ENCODE measurements at regions of chr9 and their contacts with region 1.

Region 1: DNA sequence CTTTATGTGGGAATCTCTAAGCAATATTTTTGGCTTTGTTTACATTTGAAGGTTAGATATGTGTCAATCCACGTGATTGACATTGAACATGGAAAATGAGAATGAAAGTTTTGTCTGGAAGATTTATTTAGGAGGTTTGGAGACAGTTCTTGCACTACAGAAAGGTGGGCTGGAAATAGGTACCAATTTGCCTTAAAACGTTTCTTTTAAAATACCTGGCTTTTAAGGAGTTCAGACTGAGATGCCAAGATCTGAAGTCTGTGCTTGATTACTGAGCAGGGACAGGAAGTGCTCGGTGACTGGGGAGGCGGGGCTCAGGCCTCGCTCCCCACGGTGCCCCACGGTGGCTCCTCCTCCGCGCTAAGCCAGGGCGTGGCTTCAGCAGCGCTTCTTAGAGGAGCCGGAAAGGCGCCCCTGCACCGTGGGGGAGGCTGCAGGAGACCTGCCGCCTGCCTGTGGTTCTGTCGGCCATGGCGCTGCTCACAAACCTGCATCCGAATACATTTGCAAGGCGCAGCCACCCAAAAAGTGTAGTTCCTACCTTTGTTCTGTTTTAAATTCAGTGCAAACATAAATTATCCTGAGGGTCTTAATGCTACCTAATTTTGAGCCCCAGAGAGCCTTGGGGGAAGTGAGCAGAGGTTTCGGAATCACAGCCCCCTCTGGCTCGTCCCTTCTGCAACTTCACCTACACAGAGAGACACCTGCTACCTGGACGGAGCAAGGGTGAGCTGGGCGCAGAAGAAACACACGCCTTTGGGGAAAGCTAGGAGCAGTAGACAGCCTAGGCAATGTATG is 49.2 kb downstream of the USP20 start:
- H3K4me3 Mint-ChIP-seq: peak overlapping the region; percentile 74
- H3K27ac Mint-ChIP-seq: peak overlapping the region; percentile 86
- H3K4me1 Mint-ChIP-seq: peaks cover 58% of the 10 kb centered on the region
- H3K27me3 Mint-ChIP-seq: no peaks in the 10 kb centered on the region

Region 2: GRCh38 chr9:129900263-129901027 is 16.0 kb after region 1 on chr9:
- intact Hi-C with region 1: loop called (anchors 2 kb)
- H3K4me3 Mint-ChIP-seq: no peak overlapping the region
- H3K27ac Mint-ChIP-seq: peak overlapping the region; percentile 80
- H3K4me1 Mint-ChIP-seq: peaks cover 64% of the 10 kb centered on the region
- H3K27me3 Mint-ChIP-seq: no peaks in the 10 kb centered on the region

Region 3: GRCh38 chr9:130053504-130054324 is 169.3 kb after region 1 on chr9 and contains the start of gene GPR107:
- intact Hi-C with region 1: loop called (anchors 5 kb)
- H3K4me3 Mint-ChIP-seq: peak within 1 kb of the TSS; percentile 92
- H3K27ac Mint-ChIP-seq: peak within 1 kb of the TSS; percentile 91
- H3K4me1 Mint-ChIP-seq: peaks cover 26% of the 10 kb centered on the region
- H3K27me3 Mint-ChIP-seq: no peaks in the 10 kb centered on the region

Region 4: GRCh38 chr9:130095872-130096271 is 211.5 kb after region 1 on chr9:
- intact Hi-C with region 1: loop called (anchors 5 kb)
- H3K4me3 Mint-ChIP-seq: no peak overlapping the region
- H3K27ac Mint-ChIP-seq: peak overlapping the region; percentile 64
- H3K4me1 Mint-ChIP-seq: peaks cover 22% of the 10 kb centered on the region
- H3K27me3 Mint-ChIP-seq: no peaks in the 10 kb centered on the region